OCI-LY7 (cell line): ENCODE measurements at regions of chr4 and their contacts with region 1.

Region 1: DNA sequence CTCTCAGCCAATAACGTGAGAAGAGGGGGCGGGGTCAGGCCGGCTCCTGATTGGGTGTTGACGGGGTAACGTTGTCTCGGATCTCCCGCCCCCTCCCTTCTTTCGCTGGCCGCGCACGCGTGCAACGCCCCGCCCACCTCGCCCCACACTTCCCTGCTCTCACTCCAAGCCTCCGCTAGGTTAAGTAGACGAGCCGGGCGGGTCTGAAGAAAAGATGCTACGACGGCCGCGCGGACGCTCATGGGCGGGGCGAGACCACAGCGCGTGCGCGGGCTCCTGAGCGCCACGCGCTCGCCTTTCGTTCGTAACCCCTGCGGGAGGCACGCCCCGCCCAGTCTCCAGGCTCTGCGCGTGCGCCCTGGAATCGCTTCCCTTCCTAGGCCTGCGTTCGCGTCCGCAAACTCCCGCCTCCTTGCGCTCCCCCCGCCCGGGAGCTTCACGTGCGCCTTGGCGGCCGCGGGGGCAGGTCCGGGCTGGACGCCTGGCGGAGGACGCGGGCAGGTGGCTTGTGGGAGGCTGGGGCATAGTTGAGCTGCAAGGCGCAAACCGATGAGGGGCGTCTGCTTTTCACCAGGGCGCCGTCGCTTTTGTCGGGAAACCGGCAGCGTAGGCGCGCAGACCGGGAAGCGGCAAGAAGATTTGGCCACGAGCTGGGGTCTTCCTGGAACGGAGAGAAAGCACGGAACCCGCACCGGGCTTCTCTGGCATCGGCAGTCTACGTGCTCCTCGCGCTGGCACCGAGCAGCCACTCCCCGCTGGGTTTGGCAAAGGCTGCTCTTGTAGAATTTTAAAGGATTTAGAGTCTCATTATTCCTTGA is 467 bp upstream of the PGRMC2 start:
- DNase-seq: peak; percentile 99
- H3K4me3 ChIP-seq: peak overlapping the region; percentile 98
- H3K27ac ChIP-seq: peak overlapping the region; percentile 72
- H3K4me1 ChIP-seq: peaks cover 25% of the 10 kb centered on the region
- CTCF ChIP-seq: no peak

Region 2: GRCh38 chr4:127188856-127189255 is 1099.2 kb before region 1 on chr4:
- CTCF ChIA-PET with region 1: no interaction called
- POLR2A ChIA-PET with region 1: no interaction called
- intact Hi-C with region 1: no loop called
- DNase-seq: no peak
- H3K4me3 ChIP-seq: no peak overlapping the region
- H3K27ac ChIP-seq: no peak overlapping the region
- H3K4me1 ChIP-seq: no peaks in the 10 kb centered on the region
- CTCF ChIP-seq: no peak

Region 3: DNA sequence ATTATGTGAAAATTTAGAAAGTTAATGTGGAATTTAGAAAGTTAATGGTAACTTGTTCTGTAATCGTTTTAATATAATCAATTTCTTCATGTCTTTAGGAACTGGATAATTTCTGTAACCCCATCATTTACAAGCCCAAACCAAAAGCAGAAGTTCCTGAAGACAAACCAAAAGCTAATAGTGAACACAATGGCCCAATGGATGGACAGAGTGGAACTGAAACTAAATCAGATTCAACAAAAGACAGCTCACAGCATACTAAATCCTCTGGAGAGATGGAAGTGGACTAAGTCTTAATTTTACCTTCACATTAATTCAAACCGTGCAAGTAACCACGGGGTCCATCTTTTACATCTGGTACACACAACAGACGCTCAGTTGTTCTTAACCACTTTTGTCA is 455.5 kb before region 1 on chr4:
- CTCF ChIA-PET with region 1: no interaction called
- POLR2A ChIA-PET with region 1: no interaction called
- intact Hi-C with region 1: no loop called
- DNase-seq: peak; percentile 6
- H3K4me3 ChIP-seq: no peak overlapping the region
- H3K27ac ChIP-seq: no peak overlapping the region
- H3K4me1 ChIP-seq: no peaks in the 10 kb centered on the region
- CTCF ChIP-seq: no peak

Region 4: GRCh38 chr4:127880764-127881562 is 407.1 kb before region 1 on chr4 and contains the start of gene PLK4:
- CTCF ChIA-PET with region 1: no interaction called
- POLR2A ChIA-PET with region 1: no interaction called
- intact Hi-C with region 1: loop called (anchors 2 kb)
- DNase-seq: peak; percentile 97
- H3K4me3 ChIP-seq: peak within 1 kb of the TSS; percentile 72
- H3K27ac ChIP-seq: peak within 1 kb of the TSS; percentile 67
- H3K4me1 ChIP-seq: peaks cover 29% of the 10 kb centered on the region
- CTCF ChIP-seq: no peak
- total RNA-seq, gene PLK4: 74.1 and 79.3 TPM in 2 replicates

Region 5: GRCh38 chr4:127917151-127917550 is 370.9 kb before region 1 on chr4:
- CTCF ChIA-PET with region 1: no interaction called
- POLR2A ChIA-PET with region 1: no interaction called
- intact Hi-C with region 1: no loop called
- DNase-seq: no peak
- H3K4me3 ChIP-seq: no peak overlapping the region
- H3K27ac ChIP-seq: no peak overlapping the region
- H3K4me1 ChIP-seq: no peaks in the 10 kb centered on the region
- CTCF ChIP-seq: no peak

Region 6: DNA sequence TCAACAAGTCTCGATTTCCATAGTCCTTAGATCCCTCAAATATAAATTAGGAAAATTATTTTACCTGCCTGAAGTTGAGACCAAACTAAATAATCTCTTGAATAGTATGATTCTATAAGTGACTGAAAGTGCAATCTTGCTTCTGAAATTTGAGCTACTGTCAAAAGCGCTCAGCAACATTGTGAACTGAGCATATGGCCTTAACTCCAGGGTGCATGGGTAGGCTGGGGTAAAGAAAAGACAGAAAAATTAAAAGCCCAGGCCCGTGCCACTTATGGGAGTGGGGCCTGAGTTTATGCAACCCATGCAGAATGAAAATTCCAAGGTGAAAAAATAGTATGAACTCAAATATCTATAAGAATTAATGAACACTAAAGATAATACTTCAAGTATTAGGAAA is 10.2 kb before region 1 on chr4:
- CTCF ChIA-PET with region 1: no interaction called
- POLR2A ChIA-PET with region 1: interaction called, 11 read pairs
- intact Hi-C with region 1: no loop called
- DNase-seq: no peak
- H3K4me3 ChIP-seq: no peak overlapping the region
- H3K27ac ChIP-seq: no peak overlapping the region
- H3K4me1 ChIP-seq: no peaks in the 10 kb centered on the region
- CTCF ChIP-seq: no peak

Region 7: GRCh38 chr4:128427832-128428366 is 139.8 kb after region 1 on chr4:
- CTCF ChIA-PET with region 1: no interaction called
- POLR2A ChIA-PET with region 1: no interaction called
- intact Hi-C with region 1: no loop called
- DNase-seq: no peak
- H3K4me3 ChIP-seq: no peak overlapping the region
- H3K27ac ChIP-seq: no peak overlapping the region
- H3K4me1 ChIP-seq: no peaks in the 10 kb centered on the region
- CTCF ChIP-seq: no peak

Region 8: DNA sequence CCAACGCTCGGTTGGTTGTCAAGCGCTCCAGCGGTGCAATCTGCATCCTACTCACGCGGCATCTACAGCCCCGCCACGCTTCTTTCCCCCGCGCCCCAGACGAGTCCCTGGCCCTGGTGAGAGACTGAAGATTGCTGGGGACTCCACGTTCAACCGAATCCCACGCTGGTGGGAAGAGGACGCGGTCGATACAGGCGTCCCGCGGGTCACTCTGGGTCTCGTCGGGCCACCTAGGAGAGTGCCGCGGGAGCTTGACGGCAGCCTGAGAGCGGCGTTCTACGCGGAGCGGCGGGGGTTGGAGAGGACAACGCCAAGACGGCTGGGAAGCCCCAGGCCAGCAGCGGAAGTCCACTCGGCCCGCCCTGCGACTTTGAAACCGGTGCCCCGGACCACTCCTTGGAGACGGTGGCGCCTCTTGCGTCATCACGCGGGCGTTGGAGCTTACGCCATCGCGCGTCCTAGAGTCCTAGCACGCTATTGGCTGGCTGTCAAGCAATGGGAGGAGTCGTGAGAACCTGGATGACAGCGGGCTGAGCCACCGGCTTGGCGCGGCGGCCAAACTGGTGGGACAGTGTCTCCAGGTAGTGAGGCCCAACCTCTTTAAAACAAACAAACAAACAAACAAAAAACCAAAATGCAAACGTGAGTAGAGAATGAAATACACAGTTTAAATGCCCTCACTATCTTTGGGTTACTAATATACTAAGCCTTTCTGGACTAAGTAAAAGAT is 805.3 kb after region 1 on chr4 and contains the start of gene SCLT1:
- CTCF ChIA-PET with region 1: no interaction called
- POLR2A ChIA-PET with region 1: interaction called, 5 read pairs
- intact Hi-C with region 1: loop called (anchors 2 kb)
- DNase-seq: peak; percentile 98
- H3K4me3 ChIP-seq: peak within 1 kb of the TSS; percentile 88
- H3K27ac ChIP-seq: peak within 1 kb of the TSS; percentile 77
- H3K4me1 ChIP-seq: peaks cover 41% of the 10 kb centered on the region
- CTCF ChIP-seq: no peak
- total RNA-seq, gene SCLT1: 36.9 and 42.5 TPM in 2 replicates